Natural killer cell (primary cell): ENCODE measurements at regions of chr2 and their contacts with region 1.

Region 1: DNA sequence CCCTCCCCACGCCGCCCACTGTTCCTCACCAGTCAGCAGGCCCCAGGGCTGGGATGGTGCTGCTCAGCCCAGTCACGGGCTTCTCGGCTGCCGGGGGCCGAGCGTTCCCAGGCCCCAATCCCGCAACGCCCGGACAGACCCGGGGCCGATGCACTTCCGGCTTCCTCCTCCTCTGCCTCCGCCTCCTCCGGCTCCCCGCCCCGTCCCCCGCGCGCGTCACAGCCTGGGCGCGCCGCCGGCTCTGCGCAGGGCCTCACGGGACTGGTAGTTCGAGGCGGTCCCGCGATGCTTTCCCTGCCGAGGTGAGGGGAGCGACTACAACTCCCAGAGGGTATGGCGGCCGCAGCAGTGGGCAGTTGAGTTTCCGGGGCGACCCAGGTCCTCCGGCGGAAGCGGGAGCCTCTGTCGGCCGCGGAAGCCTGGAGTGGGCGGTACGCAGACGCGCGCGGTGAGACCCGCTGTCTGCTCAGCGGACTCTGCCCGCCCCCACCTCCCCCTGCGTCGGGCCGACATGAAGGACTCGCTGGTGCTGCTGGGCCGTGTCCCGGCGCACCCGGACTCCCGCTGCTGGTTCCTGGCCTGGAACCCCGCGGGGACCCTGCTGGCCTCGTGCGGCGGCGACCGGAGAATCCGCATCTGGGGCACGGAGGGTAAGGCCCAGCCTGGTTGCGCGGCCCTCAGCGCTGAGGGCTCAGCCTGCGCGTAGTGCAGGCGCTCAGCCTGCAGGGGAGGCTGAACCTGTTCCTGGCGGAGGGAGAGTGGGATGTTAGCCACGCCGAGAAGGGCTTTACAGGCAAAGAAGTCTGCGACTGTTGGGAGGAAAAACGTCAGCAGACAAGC is at the starts of genes CIAO1 and TMEM127:
- DNase-seq: peak; percentile 97
- ATAC-seq: peak; percentile 92 to 98 (median 93)
- H3K4me3 ChIP-seq: peak within 1 kb of the TSS; percentile 83
- H3K4me3 Mint-ChIP-seq: peak within 1 kb of the TSS; percentile 97
- H3K27ac ChIP-seq: peak within 1 kb of the TSS; percentile 85
- H3K27ac Mint-ChIP-seq: peak within 1 kb of the TSS; percentile 92
- H3K4me1 ChIP-seq: peaks cover 41% of the 10 kb centered on the region
- H3K4me1 Mint-ChIP-seq: peaks cover 39 to 45% of the 10 kb centered on the region in 2 donors
- H3K27me3 ChIP-seq: no peaks in the 10 kb centered on the region
- H3K27me3 Mint-ChIP-seq: no peaks in the 10 kb centered on the region
- CTCF ChIP-seq: peak; percentile 25
- total RNA-seq, gene CIAO1: 74.9 to 109 (median 106) TPM
- total RNA-seq, gene TMEM127: 49.8 to 59.3 (median 54.5) TPM

Region 2: GRCh38 chr2:96024336-96025193 is 241.5 kb before region 1 on chr2:
- intact Hi-C with region 1: loop called (anchors 10 kb)
- DNase-seq: no peak
- ATAC-seq: no peak
- H3K4me3 ChIP-seq: no peak overlapping the region
- H3K4me3 Mint-ChIP-seq: no peak overlapping the region
- H3K27ac ChIP-seq: no peak overlapping the region
- H3K27ac Mint-ChIP-seq: no peak overlapping the region
- H3K4me1 ChIP-seq: no peaks in the 10 kb centered on the region
- H3K4me1 Mint-ChIP-seq: peaks cover 0 to 6% of the 10 kb centered on the region in 2 donors
- H3K27me3 ChIP-seq: no peaks in the 10 kb centered on the region
- H3K27me3 Mint-ChIP-seq: no peaks in the 10 kb centered on the region
- CTCF ChIP-seq: no peak

Region 3: GRCh38 chr2:96145036-96145847 is 120.8 kb before region 1 on chr2 and contains the start of gene DUSP2:
- intact Hi-C with region 1: loop called (anchors 2 kb)
- DNase-seq: peak; percentile 81 to 94
- ATAC-seq: peak; percentile 51 to 75 (median 65)
- H3K4me3 ChIP-seq: peak within 1 kb of the TSS; percentile 71
- H3K4me3 Mint-ChIP-seq: peak within 1 kb of the TSS; percentile 94
- H3K27ac ChIP-seq: peak within 1 kb of the TSS; percentile 99
- H3K27ac Mint-ChIP-seq: peak within 1 kb of the TSS; percentile 92 to 94
- H3K4me1 ChIP-seq: peaks cover 74% of the 10 kb centered on the region
- H3K4me1 Mint-ChIP-seq: peaks cover 30 to 64% of the 10 kb centered on the region in 2 donors
- H3K27me3 ChIP-seq: no peaks in the 10 kb centered on the region
- H3K27me3 Mint-ChIP-seq: no peaks in the 10 kb centered on the region
- CTCF ChIP-seq: no peak
- total RNA-seq, gene DUSP2: 300 to 564 (median 432) TPM

Region 4: DNA sequence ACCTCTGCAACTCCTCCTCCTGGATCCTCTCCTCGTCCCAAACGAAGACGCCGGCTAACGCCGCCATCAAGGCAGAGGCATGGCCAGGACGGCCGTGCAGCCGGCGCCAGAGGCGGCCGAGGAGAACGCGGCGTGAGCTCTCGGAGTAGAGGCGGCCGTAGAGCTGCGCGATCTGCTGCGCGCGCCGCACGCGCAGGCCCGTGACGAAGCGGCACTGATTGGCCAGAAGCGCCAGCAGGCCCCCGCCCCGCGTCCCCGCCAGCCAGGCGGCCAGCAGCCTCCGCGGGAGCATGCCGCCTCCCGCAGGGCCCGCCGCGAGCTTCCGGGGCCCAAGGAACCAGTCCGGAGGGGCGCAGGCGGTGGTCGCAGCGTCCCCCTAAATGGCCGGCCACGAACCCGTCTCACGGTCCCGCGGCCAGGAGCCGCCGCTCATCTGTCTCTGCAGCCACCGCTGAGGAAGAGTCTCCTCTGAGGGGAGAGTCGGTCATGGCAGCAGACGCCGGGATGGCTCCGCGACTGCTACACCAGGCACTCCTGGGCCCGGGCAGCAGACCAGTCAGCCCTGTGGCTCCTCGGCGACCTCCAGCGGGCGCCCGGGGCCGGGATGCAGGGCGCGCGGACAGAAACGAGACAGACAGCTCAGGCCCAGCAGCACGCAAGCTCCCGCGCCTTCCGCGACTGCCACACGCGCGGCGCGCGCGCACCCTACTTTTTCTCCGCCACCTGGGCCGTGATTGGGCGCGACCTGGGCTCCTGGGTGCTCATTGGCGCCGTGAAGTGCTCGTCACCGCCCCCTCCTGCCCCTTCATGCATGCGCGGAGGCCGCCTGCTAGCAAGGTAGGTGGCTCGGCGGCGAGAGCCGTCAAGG is 57.7 kb before region 1 on chr2 and contains the start of gene STARD7:
- intact Hi-C with region 1: loop called (anchors 2 kb)
- DNase-seq: peak; percentile 95 to 98
- ATAC-seq: peak; percentile 82 to 94 (median 88)
- H3K4me3 ChIP-seq: peak within 1 kb of the TSS; percentile 91
- H3K4me3 Mint-ChIP-seq: peak within 1 kb of the TSS; percentile 95
- H3K27ac ChIP-seq: peak within 1 kb of the TSS; percentile 82
- H3K27ac Mint-ChIP-seq: peak within 1 kb of the TSS; percentile 88 to 97
- H3K4me1 ChIP-seq: peaks cover 30% of the 10 kb centered on the region
- H3K4me1 Mint-ChIP-seq: peaks cover 44 to 46% of the 10 kb centered on the region in 2 donors
- H3K27me3 ChIP-seq: no peaks in the 10 kb centered on the region
- H3K27me3 Mint-ChIP-seq: no peaks in the 10 kb centered on the region
- CTCF ChIP-seq: no peak
- total RNA-seq, gene STARD7: 62.6 to 106 (median 86.1) TPM

Region 5: GRCh38 chr2:96305091-96305978 is 39.3 kb after region 1 on chr2 and contains the start of gene SNRNP200:
- intact Hi-C with region 1: loop called (anchors 2 kb)
- DNase-seq: peak; percentile 83 to 96
- ATAC-seq: peak; percentile 90 to 95 (median 90)
- H3K4me3 ChIP-seq: peak within 1 kb of the TSS; percentile 91
- H3K4me3 Mint-ChIP-seq: peak within 1 kb of the TSS; percentile 98
- H3K27ac ChIP-seq: peak within 1 kb of the TSS; percentile 94
- H3K27ac Mint-ChIP-seq: peak within 1 kb of the TSS; percentile 97 to 99
- H3K4me1 ChIP-seq: peaks cover 24% of the 10 kb centered on the region
- H3K4me1 Mint-ChIP-seq: peaks cover 55 to 56% of the 10 kb centered on the region in 2 donors
- H3K27me3 ChIP-seq: no peaks in the 10 kb centered on the region
- H3K27me3 Mint-ChIP-seq: no peaks in the 10 kb centered on the region
- CTCF ChIP-seq: no peak
- total RNA-seq, gene SNRNP200: 207 to 236 (median 228) TPM

Region 6: GRCh38 chr2:96320728-96321622 is 54.9 kb after region 1 on chr2:
- intact Hi-C with region 1: loop called (anchors 5 kb)
- DNase-seq: peak; percentile 21 to 50
- ATAC-seq: peak in 2 of 3 donors; percentile 13 to 23
- H3K4me3 ChIP-seq: peak overlapping the region; percentile 90
- H3K4me3 Mint-ChIP-seq: peak overlapping the region; percentile 90
- H3K27ac ChIP-seq: peak overlapping the region; percentile 75
- H3K27ac Mint-ChIP-seq: peak overlapping the region; percentile 64 to 75
- H3K4me1 ChIP-seq: peaks cover 59% of the 10 kb centered on the region
- H3K4me1 Mint-ChIP-seq: peaks cover 62 to 76% of the 10 kb centered on the region in 2 donors
- H3K27me3 ChIP-seq: no peaks in the 10 kb centered on the region
- H3K27me3 Mint-ChIP-seq: no peaks in the 10 kb centered on the region
- CTCF ChIP-seq: no peak

Region 7: DNA sequence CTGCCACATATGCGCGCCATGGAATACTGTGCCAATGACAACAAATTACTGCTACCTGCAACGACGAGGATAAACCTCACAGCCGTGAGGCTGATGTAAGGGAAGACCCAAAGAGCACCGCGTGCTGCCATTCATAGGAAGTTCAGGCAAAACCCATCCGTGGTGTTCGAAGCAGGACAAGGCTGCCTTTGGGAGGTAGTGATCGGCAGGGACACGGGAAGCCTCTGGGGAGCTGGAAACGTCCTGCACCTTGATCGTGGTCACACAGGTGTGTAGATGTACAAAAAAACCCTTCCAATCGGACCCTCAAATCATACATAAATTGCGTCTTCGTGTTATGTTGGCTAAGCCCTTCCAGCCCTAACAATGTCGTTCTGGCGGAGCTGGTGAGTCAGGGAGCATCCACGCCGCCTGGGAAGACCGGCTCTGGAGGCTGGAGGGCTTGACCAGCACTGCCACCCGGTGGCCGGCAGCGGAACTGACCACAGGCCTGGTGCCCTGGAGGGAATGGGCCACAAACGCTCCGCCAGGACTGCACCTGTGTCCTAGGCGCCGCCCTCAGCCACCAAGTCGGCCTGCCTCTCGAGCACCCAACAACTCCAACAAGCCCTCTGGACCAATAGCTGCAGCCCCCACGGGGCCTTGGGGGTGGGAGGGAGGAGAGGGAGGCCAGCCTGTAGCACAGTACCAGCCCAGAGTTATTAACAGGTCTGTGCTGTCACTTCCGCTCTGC is 243.2 kb after region 1 on chr2:
- intact Hi-C with region 1: loop called (anchors 5 kb)
- DNase-seq: peak; percentile 66 to 68
- ATAC-seq: peak; percentile 58 to 63 (median 61)
- H3K4me3 ChIP-seq: no peak overlapping the region
- H3K4me3 Mint-ChIP-seq: peak overlapping the region; percentile 47
- H3K27ac ChIP-seq: no peak overlapping the region
- H3K27ac Mint-ChIP-seq: peak overlapping the region in 1 of 2 donors; percentile 22
- H3K4me1 ChIP-seq: peaks cover 23% of the 10 kb centered on the region
- H3K4me1 Mint-ChIP-seq: peaks cover 24% of the 10 kb centered on the region in 2 donors
- H3K27me3 ChIP-seq: peaks cover 2% of the 10 kb centered on the region
- H3K27me3 Mint-ChIP-seq: peaks cover 13 to 21% of the 10 kb centered on the region in 2 donors
- CTCF ChIP-seq: peak; percentile 83